Activated CD4-positive, alpha-beta T cell treated with anti-CD3 and anti-CD28 coated beads, Interleukin-2, amount 10 ng/mL, durations not matched to agents 24 days and 14 days (primary cell): ENCODE measurements at regions of chr21 and their contacts with region 1.

Region 1: DNA sequence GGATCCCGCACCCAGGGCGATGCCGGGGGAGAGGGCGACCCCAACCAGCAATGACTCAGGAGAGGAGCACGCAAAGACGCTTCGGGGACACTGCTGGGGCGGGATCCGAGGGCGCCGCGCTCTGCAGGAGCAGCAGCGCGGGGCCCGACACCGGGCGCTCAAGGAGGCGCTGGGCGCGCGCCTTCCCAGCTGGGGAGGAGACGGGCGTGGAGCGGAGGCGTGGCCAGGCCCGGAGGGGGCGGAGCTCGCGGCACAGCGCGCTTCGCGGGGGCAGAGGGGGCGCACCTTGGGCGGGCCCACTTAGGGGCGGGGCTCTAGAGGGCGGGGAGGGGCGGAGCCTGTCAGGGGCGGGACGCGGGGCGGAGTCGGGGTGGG is 369 bp downstream of the SUMO3 start:
- DNase-seq: peak; percentile 99
- H3K4me3 Mint-ChIP-seq: peak overlapping the region; percentile 79
- H3K27ac Mint-ChIP-seq: peak overlapping the region; percentile 20
- H3K4me1 Mint-ChIP-seq: peaks cover 6% of the 10 kb centered on the region
- H3K27me3 Mint-ChIP-seq: no peaks in the 10 kb centered on the region

Region 2: DNA sequence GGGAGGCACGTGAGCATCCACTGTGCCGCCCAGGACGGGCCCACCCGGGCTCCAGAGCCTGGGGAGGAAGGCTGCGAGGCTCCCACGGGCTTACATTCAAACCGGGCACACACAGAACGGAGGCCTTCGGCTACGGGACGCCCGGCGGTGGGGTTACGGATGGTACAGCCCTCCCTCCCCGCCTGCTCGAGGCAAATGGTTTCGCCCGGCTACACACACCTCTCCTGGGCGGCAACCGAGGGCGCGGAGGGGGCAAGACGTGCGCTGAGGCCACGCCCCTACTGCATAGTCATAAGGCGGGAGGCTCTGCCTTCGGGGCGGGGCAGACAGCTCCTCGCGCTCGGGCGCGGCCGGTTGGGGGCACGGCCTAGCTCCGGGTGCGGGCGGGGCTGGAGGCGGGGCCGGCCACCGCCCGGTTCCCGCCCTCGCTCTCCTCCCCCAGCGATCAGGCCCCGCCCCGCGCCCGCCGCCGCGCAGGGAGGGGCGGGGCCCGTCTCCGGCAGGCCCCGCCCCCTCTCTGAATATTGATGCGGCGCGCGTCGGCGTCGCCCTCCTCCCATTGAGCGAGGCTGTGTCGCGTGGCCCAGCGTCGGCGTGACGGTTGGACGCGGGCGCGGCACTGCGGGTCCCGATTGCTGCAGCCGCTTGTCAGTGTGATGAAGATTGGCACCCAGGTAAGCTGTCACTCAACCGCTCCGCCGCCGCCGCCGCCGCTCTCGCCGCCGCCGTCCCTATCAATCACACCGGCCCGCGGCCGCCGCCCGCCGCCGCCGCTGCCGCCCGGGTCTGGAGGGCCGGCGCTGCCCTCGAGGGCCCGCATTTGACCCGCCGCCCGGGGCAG is 1843.3 kb before region 1 on chr21 and contains the start of gene PKNOX1:
- intact Hi-C with region 1: loop called (anchors 10 kb)
- DNase-seq: peak; percentile 100
- H3K4me3 Mint-ChIP-seq: peak within 1 kb of the TSS; percentile 90
- H3K27ac Mint-ChIP-seq: peak within 1 kb of the TSS; percentile 94
- H3K4me1 Mint-ChIP-seq: peaks cover 26% of the 10 kb centered on the region
- H3K27me3 Mint-ChIP-seq: no peaks in the 10 kb centered on the region
- total RNA-seq, gene PKNOX1: 23.1 and 26.2 TPM in 2 replicates

Region 3: DNA sequence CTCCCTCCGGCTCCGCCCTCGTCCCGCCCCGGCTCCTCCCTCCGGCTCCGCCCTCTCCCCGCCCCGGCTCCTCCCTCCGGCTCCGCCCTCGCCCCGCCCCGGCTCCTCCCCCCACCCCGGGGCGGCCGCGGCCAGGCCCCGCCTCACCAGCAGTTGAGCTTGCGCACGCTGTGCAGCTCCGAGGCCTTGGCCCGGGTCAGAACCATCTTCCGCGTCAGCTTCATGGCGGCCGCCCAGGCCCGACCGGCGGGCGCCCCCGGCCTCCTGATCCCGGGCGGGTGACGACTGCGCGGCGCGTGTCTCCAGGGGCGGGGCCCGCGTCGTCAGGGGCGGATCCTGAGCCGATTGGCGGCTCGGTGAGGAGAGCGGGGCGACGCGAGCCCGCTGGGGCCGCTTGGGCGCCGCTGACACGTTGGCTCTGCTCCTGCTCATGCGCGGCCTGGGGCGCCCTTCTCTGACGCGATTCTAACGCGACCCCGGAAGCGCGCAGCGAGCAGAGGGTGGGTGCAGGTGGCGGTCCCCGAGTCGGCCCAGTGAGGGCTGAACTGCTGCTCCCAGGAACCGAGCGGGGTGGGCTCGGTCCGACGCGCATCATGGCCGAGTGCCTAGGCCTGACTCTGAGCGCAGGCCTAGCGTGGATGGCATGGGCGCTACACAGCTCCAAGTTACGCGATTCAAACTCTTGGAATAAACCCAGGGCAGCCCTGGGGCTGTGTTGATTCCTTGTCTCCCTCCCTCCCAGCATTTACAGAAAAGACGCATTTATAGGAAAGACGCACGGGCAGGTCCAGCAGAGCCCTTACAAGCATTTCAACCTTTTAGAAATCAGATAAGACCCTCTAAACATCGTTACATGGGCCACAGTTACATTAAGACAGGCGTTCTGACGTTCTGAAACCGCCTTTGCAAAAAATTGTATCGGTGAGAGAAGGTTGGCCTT is 478.3 kb before region 1 on chr21 and contains the start of gene CFAP410:
- intact Hi-C with region 1: loop called (anchors 2 kb)
- DNase-seq: peak; percentile 99
- H3K4me3 Mint-ChIP-seq: peak within 1 kb of the TSS; percentile 93
- H3K27ac Mint-ChIP-seq: peak within 1 kb of the TSS; percentile 92
- H3K4me1 Mint-ChIP-seq: peaks cover 13% of the 10 kb centered on the region
- H3K27me3 Mint-ChIP-seq: no peaks in the 10 kb centered on the region
- total RNA-seq, gene CFAP410: 15.1 and 18.5 TPM in 2 replicates

Region 4: DNA sequence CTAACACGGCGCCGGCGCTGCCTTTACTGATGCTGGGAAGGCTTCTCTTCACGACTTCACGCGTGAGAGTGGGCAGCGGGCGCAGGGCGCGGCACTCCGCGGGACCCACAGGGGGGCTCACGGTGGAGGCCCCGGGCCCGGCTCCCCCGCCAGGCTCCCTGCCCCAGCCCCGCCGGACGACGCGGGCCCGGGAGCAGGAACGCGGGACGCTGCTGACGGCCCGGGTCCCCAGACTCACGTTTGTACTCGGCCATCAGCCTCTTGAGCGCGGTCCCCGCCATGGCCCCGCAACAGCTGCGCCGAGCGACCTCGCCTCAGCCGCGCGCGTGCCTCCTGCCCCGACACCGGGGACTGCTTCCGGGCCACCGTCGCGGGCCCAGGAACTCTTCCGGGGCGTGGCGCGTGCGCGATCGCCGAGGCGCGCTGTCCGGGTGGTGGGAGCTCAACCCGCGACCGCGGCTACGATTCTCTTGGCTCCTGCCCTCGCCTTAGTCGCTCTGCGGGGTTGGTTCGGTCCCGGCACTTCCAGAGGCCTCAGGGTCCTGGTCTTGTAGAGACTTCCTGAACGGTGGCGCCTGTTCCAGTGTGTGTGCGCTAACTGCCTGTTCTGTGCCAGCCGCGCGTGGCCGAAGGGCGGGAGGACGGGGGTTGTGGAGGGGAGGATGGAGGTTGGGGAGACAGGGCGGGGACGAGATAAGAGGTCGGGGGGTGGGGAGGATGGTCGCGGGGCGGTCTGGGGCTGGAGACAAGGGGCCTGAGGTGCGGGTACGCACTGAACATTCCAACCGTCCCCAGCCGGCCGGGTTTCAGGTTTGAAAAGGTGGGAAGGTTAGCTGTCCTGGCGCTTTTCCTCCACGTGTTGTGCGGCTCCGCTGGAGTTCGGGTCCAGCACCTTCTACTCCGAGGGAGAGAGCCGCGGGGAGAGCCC is 15.8 kb before region 1 on chr21 and contains the start of gene UBE2G2:
- intact Hi-C with region 1: loop called (anchors 1 kb)
- DNase-seq: peak; percentile 97
- H3K4me3 Mint-ChIP-seq: peak within 1 kb of the TSS; percentile 100
- H3K27ac Mint-ChIP-seq: peak within 1 kb of the TSS; percentile 93
- H3K4me1 Mint-ChIP-seq: peaks cover 37% of the 10 kb centered on the region
- H3K27me3 Mint-ChIP-seq: no peaks in the 10 kb centered on the region
- total RNA-seq, gene UBE2G2: 143 and 148 TPM in 2 replicates

Region 5: DNA sequence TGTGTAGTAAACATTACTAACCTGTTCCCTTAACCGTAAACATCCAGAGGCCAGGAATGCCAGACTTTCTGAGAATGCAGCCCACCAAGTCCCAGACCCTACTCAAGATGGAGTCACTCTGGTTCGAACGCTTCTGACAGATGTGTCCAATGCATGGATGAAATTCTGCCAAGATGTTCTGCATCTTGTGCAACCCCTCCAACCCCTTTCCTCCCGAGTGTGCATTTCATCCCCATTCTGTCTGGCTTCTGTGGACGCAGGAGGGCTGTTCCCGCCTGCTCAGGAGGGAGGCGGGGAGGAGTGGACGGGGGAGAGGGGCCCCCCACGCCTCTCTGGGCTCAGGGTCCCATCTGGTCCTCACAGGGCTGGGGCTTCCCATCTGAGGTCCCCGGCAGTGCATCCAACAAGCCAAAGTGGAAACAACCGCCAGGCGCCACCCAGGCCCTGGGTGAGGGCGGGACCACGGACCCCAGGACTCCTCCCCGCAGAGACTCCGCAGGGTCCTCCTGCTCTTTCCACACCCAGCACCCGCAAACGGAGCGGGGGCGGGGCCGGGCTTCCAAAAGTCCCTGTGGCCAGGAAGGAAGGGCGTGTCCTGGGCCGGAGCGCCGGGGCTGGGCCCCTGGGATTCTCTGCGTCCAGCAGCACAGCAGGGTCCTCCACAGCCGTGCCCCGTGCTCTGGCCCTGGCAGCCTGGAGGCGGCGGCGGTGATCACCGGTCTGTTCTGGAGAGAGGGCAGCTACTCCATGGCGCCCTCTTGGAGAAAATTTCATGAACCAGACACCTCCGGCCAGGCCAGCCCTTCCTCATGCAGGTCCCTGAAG is 28.1 kb after region 1 on chr21:
- intact Hi-C with region 1: loop called (anchors 2 kb)
- DNase-seq: peak; percentile 91
- H3K4me3 Mint-ChIP-seq: peak overlapping the region; percentile 73
- H3K27ac Mint-ChIP-seq: peak overlapping the region; percentile 70
- H3K4me1 Mint-ChIP-seq: peaks cover 10% of the 10 kb centered on the region
- H3K27me3 Mint-ChIP-seq: no peaks in the 10 kb centered on the region

Region 6: DNA sequence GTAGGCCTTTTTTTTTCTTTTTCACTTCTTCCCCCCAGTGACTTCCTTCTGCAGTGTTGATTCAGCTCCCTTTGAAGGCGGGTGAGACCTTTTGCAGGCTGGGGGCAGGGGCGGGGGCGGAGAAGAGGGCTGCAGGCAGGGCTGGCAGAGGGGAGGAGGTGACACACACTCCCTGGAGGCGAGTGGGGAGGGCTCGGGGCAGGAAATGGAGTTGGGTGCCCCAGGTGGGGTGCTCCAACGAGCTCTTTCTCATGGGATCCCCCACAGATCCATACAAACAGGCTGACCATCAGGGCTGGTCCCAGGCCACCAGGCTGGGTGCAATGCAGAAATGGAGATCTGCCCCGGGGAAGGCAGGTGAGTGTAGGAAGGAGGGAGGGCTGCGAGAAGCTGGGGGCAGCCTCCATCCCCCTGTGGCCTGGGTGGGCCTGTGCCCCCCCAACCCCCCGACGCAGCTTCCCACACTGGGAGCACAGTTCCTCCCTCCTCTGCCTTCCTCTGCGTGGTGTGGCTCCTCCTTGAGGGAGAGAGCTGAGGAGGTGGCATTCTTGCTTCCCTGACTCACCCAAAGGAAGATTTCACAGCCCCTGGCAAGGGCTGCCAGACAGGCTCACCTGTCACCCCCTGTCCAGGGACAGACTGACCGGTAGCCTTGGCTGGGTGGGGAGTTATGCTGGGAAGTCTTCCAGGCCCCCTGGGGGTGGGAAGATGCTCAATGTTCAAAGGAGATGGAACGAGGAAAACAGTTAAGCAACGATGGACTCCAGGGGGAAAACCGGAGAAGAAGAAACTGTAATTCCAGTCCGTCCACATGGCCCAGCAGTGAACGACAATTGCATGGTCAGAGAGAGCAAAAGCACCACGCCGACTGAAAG is 110.3 kb after region 1 on chr21:
- intact Hi-C with region 1: loop called (anchors 5 kb)
- DNase-seq: peak; percentile 91
- H3K4me3 Mint-ChIP-seq: peak overlapping the region; percentile 94
- H3K27ac Mint-ChIP-seq: peak overlapping the region; percentile 99
- H3K4me1 Mint-ChIP-seq: peaks cover 78% of the 10 kb centered on the region
- H3K27me3 Mint-ChIP-seq: no peaks in the 10 kb centered on the region

Region 7: DNA sequence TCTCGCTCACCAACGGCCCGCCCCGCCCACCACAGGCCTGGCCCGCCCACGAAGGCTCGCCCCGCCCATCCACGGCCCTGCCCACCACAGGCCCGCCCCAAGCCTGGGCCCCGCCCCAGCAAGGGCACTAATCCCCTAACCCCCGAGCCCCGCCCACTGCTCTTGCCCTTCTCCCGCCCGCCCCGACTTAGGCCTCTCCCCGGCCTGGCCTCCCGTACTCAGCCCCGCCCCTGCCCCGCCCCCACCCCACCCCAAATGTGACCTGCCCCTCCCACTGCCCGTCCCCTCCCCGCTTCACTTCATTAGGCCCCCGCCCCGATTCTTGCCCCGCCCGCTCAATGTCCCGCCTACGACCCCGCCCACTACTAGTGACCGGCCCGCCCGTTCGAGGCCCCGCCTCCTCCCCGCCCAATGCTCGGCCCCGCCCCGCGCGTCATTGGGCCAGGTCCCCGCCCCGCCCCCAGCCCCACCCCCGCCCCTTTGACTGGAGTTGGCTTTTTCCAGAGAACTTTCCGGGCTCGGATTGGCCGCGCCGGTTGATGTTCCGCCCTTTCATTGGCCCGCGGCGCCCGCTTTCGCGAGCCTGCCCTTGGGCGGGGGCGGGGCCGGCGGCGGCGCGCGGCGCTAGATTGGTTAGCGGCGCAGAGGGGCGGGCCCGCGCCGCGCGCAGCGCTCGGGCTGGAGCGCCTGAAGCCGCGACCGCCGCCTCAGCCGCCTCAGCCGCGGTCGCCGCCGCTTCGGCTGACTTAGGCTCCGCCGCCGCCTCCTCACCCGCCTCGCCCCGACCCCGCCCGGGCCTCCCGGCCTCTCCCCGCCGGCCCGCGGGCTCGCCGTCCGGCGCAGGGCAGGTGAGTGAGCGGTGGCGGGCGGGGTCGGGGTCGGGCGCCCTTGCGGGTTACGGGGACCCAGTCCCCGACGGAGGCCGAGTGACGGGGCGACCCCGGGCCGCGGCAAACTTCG is 825.8 kb after region 1 on chr21 and contains the start of gene PCBP3:
- intact Hi-C with region 1: loop called (anchors 5 kb)
- DNase-seq: peak; percentile 98
- H3K4me3 Mint-ChIP-seq: peak within 1 kb of the TSS; percentile 82
- H3K27ac Mint-ChIP-seq: peak within 1 kb of the TSS; percentile 64
- H3K4me1 Mint-ChIP-seq: peaks cover 16% of the 10 kb centered on the region
- H3K27me3 Mint-ChIP-seq: peaks cover 11% of the 10 kb centered on the region
- total RNA-seq, gene PCBP3: 7.5 and 9.7 TPM in 2 replicates